Ovary (tissue), 10 donors: ENCODE measurements at regions of chr17 and their contacts with region 1.

Region 1: GRCh38 chr17:79393358-79394202 is 217.3 kb downstream of the RBFOX3 start:
- DNase-seq: peak; percentile 65 to 90 (median 80)
- H3K4me3 ChIP-seq: no peak overlapping the region
- H3K27ac ChIP-seq: no peak overlapping the region
- H3K4me1 ChIP-seq: no peaks in the 10 kb centered on the region
- H3K27me3 ChIP-seq: no peaks in the 10 kb centered on the region
- CTCF ChIP-seq: peak; percentile 56 to 82 (median 64)
- EP300 ChIP-seq: no peak
- POLR2A ChIP-seq: no peak

Region 2: DNA sequence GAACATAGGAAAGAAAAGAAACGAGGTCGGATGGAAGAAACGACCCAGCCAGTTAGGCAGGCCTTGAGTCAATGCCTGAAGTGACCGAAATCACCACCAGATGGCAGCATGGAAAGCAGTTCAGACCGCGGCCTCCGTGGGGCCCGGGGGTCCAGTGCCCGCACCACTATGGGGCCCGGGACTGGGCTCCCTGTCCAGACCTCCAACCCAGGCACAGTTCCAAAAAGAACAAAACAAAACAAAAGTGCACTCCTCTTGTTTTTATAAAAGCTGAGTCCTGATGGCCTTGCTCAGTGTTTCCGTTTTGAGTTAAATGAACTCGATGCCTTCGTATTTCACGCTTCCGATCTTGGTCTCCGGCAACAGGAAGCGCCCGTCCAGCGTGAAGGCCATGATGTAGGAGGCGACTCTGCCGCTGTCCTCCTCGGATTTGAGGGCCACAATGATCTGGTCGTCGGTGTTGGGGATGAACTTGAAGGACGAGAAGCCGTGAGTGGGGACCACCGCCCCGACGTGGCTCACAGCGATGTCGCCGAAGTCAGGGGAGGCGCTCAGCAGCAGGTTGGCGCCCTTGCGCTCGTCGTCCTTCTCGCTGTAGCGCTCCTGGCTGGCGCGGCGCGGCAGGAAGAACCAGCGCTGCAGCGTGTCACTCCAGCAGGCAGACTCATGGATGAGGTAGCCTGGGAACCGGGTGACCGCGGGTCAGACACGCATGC is 400.2 kb before region 1 on chr17:
- intact Hi-C with region 1: loop called in 2 of 4 experiments (anchors 10 kb)
- DNase-seq: peak; percentile 64 to 80 (median 78)
- H3K4me3 ChIP-seq: no peak overlapping the region
- H3K27ac ChIP-seq: peak overlapping the region in 1 of 2 donors; percentile 18
- H3K4me1 ChIP-seq: peaks cover 3% of the 10 kb centered on the region
- H3K27me3 ChIP-seq: no peaks in the 10 kb centered on the region
- CTCF ChIP-seq: peak; percentile 65 to 76 (median 70)
- EP300 ChIP-seq: no peak
- POLR2A ChIP-seq: no peak

Region 3: DNA sequence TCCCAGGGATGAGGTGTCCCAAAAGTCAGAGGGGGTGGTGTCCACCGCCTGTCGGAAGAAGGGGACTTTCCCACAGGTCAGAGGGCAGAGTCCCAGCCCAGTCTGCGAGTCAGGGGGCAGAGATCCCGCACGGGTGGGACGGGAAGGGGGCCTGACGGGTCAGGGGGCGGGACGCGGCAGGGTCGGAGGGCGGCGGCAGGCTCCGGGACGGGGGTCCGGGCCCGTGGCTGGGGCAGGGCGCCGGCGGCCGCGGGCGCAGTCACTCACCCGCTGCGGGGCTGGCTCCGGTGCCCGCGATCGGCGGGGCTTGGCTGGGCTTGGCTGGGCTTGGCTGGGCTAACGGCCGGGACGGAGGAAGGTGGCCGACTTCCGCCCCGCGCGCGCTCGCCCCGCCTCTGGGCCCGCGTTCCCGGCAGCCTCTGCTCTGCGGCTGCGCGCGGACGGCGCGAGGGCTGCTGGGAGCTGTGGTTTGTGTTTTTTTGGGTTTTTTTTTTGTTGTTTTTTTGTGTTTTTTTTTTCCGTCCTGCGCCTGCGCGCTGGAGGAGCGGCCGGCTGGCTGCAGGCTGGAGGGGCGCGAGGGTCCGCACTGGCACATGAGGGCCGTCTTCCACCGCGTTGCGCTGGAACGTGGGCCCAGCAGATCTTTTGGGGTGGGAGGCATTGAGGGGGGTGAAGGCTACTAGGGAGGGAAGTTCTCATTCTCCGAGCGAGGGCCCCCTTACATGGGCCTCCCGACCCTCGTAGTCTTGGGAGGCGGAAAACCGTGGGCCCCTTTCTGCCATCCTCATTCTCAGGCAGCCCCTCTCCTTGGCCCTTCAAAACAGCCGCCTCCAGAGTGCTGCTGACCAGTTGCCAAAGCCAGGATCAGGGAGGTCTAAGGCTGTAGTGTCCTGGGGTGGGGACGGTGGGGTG is 383.9 kb before region 1 on chr17 and contains the start of gene CANT1:
- intact Hi-C with region 1: loop called in 1 of 4 experiments (anchors 10 kb)
- DNase-seq: peak; percentile 82 to 92 (median 88)
- H3K4me3 ChIP-seq: peak within 1 kb of the TSS; percentile 76
- H3K27ac ChIP-seq: peak within 1 kb of the TSS; percentile 13 to 62
- H3K4me1 ChIP-seq: peaks cover 14% of the 10 kb centered on the region
- H3K27me3 ChIP-seq: no peaks in the 10 kb centered on the region
- CTCF ChIP-seq: no peak
- EP300 ChIP-seq: no peak
- POLR2A ChIP-seq: peak; percentile 69
- total RNA-seq, gene CANT1: 20.4 to 48.8 (median 34.3) TPM

Region 4: GRCh38 chr17:79019632-79020584 is 373.7 kb before region 1 on chr17:
- intact Hi-C with region 1: loop called in 3 of 4 experiments (anchors 2 to 10 kb)
- DNase-seq: peak; percentile 62 to 80 (median 72)
- H3K4me3 ChIP-seq: no peak overlapping the region
- H3K27ac ChIP-seq: peak overlapping the region in 1 of 2 donors; percentile 28
- H3K4me1 ChIP-seq: peaks cover 7% of the 10 kb centered on the region
- H3K27me3 ChIP-seq: no peaks in the 10 kb centered on the region
- CTCF ChIP-seq: peak; percentile 18 to 82 (median 80)
- EP300 ChIP-seq: peak; percentile 68
- POLR2A ChIP-seq: no peak

Region 5: DNA sequence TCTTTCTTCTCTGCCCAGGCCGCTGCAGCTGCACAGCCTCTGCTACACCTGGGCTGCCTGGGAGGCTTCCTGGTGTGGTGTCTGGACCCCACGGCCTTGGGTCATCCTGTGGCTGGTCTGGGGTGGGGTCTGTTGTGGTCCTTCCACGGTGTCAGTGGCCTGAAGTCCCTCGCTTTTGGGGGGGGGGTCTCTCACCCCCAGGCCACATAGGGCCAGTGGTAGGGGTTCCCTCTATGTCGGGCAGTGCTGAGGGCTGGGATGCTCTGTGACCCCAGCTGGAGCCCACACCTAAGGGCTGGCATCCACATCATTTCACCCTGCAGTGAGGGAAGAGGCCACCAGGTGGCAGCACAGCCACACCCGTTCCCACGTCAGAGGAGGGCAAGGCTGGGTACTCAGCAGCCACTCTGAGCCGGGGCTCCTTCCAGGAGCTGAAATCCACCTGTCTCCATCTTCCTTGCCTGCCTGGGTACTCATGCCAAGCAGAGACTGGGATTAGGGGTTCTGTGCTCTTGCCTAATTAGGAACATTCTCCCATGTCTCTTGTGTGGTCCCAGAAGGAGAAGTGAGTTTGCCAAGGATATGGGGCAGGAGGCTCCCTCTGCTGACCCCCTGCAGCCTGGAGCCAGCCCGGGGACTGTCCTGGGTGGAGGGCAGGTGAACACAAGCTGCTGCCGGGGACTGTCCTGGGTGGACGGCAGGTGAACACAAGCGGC is 306.0 kb before region 1 on chr17:
- intact Hi-C with region 1: loop called (anchors 2 to 5 kb)
- DNase-seq: peak; percentile 43 to 85 (median 78)
- H3K4me3 ChIP-seq: no peak overlapping the region
- H3K27ac ChIP-seq: no peak overlapping the region
- H3K4me1 ChIP-seq: peaks cover 8% of the 10 kb centered on the region
- H3K27me3 ChIP-seq: no peaks in the 10 kb centered on the region
- CTCF ChIP-seq: peak; percentile 72 to 80 (median 77)
- EP300 ChIP-seq: no peak
- POLR2A ChIP-seq: no peak